ENCODE measurements at regions of chr1 and their contacts with region 1.

Region 1: DNA sequence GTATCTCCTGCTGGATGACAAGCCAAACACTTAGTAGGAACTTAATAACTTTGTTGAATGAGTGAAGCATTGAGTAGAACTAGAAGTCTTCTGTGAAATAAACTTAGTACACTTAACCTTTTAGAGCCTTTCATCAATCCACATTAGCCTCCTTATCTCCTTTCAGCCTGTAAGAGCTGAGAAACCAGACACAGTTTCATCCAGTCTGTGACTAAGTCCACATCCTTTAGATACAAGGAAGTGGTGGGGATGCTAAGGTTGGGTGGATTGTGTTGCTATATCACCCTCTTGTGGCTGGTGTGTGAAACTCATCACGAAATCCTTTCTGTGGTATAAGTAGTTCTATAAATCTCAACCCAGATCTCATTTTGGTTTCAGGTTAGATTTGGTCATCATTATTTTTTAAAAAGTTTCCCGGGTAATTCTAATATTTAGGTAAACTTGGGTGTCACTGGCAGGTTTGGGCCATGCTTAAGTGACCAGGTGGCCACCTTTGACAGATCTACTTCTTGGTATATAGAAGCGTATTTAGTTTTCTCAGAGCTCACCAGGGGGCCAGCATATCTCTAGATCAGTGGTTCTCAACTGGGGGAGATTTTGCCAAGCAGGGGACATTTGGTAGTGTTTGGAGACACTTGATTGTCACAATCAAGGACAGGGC is 27.8 kb upstream of the CD84 start:
- DNase-seq: peak in 2 of 10 donors; percentile 28 to 45
- H3K4me3 ChIP-seq: no peak overlapping the region
- H3K27ac ChIP-seq: no peak overlapping the region
- H3K27me3 ChIP-seq: peaks cover 0 to 29% (median 7%) of the 10 kb centered on the region in 45 donors
- CTCF ChIP-seq: peak in 54 of 56 donors; percentile 30 to 77 (median 57)

Region 2: GRCh38 chr1:160428655-160429054 is 178.5 kb before region 1 on chr1:
- intact Hi-C with region 1: loop called in 1 of 2 experiments (anchors 5 kb)
- DNase-seq: peak in 7 of 10 donors; percentile 34 to 63 (median 53)
- H3K4me3 ChIP-seq: no peak overlapping the region
- H3K27ac ChIP-seq: peak overlapping the region in 1 of 59 donors; percentile 27
- H3K27me3 ChIP-seq: no peaks in the 10 kb centered on the region
- CTCF ChIP-seq: peak; percentile 17 to 78 (median 60)

Region 3: DNA sequence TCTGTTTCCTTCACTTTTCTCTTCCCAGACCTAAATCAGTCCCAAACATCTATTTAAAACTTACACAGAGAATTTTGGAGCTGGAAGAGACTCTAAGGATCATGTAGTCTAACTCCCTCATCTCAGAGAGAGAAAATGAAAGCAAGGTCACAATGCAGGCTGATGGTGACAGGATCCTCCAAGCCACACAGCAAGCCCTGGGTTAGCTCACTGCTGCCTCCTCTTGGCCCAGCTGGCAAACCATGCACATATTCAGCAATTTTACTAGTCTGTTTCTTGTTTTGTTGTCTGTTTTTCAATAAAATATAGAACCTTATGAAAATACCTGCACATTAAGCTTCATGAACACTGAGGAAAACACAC is 161.1 kb after region 1 on chr1:
- intact Hi-C with region 1: no loop called
- DNase-seq: no peak
- H3K4me3 ChIP-seq: no peak overlapping the region
- H3K27ac ChIP-seq: no peak overlapping the region
- H3K27me3 ChIP-seq: peaks cover 0 to 7% (median 0%) of the 10 kb centered on the region in 45 donors
- CTCF ChIP-seq: peak in 35 of 56 donors; percentile 12 to 57 (median 29)